Calu3 (cell line): ENCODE measurements at regions of chr3 and their contacts with region 1.

Region 1: DNA sequence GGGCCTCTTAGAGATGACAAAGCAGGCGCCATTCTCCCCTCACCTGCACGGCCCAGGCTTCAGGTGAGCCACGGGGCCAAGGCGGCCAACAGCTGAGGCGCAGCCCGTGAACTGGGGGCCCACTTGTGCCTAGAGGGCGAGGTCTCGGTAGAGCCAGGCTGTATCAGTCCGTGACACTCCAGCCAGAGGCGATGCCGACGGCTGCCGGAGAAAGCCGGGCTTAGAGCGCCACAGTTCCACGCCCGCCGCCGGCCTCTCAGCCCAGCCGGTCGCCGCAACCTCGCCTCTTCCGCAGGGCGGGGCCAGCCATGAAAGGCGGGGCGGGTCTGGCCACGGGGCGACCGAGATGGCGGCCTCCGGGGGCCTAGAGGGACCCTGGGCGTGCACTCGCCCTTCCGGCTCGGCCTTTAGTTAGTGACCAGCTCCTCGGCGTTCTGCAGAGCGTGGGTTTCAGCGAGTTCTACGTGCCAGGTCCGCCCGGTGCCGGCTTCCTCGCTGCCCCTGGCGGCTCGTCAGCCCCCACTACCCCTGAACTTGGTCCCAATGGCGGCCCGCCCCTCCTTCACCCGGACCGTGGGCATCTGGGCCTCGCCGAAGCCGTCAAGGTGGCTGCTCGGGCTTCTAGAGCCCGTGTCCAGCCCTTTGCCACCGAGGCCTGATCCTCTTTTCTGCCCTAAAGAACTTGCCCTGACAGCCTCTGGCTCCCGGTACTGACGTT is at the start of gene ZNF621:
- DNase-seq: peak; percentile 92
- H3K4me3 Mint-ChIP-seq: peak within 1 kb of the TSS; percentile 97
- H3K27ac Mint-ChIP-seq: peak within 1 kb of the TSS; percentile 97
- H3K4me1 Mint-ChIP-seq: peaks cover 12% of the 10 kb centered on the region
- H3K27me3 Mint-ChIP-seq: no peaks in the 10 kb centered on the region
- CTCF ChIP-seq: no peak
- total RNA-seq, gene ZNF621: 21.1 and 22.2 TPM in 2 replicates

Region 2: DNA sequence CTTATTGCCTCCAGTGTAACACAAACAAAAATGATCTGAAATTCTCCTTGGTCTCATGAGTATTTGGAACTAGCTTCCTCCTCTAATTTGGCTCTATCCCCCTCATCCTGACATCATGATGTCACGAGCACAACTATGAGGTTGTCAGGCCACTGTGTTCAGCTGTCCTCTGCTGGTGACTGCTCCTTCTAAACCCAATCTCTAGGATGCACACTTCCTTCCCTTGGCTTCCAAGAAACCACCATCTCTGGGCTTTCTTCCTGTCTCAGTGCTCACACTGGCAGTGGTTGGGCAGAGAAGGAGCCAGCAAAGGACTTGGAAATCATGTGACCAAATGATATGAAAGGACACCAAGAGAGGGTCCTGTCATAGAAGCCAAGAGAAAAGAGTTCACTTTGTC is 245.9 kb before region 1 on chr3:
- CTCF ChIA-PET with region 1: no interaction called
- intact Hi-C with region 1: no loop called
- DNase-seq: no peak
- H3K4me3 Mint-ChIP-seq: no peak overlapping the region
- H3K27ac Mint-ChIP-seq: no peak overlapping the region
- H3K4me1 Mint-ChIP-seq: no peaks in the 10 kb centered on the region
- H3K27me3 Mint-ChIP-seq: peaks cover 8% of the 10 kb centered on the region
- CTCF ChIP-seq: no peak

Region 3: GRCh38 chr3:40505599-40506462 is 18.9 kb before region 1 on chr3 and contains the start of gene ZNF620:
- CTCF ChIA-PET with region 1: interaction called, 6 read pairs
- intact Hi-C with region 1: loop called (anchors 2 kb)
- DNase-seq: peak; percentile 87
- H3K4me3 Mint-ChIP-seq: peak within 1 kb of the TSS; percentile 83
- H3K27ac Mint-ChIP-seq: peak within 1 kb of the TSS; percentile 63
- H3K4me1 Mint-ChIP-seq: no peaks in the 10 kb centered on the region
- H3K27me3 Mint-ChIP-seq: no peaks in the 10 kb centered on the region
- CTCF ChIP-seq: no peak
- total RNA-seq, gene ZNF620: 11.3 and 13.6 TPM in 2 replicates

Region 4: DNA sequence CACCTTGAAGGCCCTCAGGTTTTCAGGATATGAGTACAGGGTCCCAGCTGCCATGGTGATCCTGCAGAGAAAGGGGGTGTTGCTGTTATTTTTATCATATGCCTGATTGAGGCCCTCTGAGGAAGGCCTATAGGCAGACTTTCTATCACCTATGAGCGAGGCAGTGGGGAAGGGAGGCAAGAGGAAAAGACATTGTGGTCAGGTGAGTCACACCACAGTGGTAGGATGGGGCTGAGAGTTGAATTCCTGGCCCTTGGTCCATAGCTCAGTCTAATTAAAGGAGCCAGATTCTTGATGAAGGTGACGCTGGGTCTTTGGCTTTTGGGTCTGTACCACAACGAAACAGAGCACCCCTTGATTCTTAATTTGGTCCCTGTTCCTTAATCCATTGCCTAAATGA is 72.7 kb after region 1 on chr3:
- CTCF ChIA-PET with region 1: no interaction called
- intact Hi-C with region 1: no loop called
- DNase-seq: no peak
- H3K4me3 Mint-ChIP-seq: no peak overlapping the region
- H3K27ac Mint-ChIP-seq: no peak overlapping the region
- H3K4me1 Mint-ChIP-seq: no peaks in the 10 kb centered on the region
- H3K27me3 Mint-ChIP-seq: no peaks in the 10 kb centered on the region
- CTCF ChIP-seq: no peak